K562 (cell line): ENCODE measurements at regions of chr11 and their contacts with region 1.

Region 1: GRCh38 chr11:125887373-125888324 is at the start of gene HYLS1:
- DNase-seq: peak; percentile 85 to 94 (median 89)
- ATAC-seq: peak; percentile 96
- H3K4me3 ChIP-seq: peak within 1 kb of the TSS; percentile 62
- H3K27ac ChIP-seq: peak within 1 kb of the TSS; percentile 83
- H3K4me1 ChIP-seq: peaks cover 13 to 31% of the 10 kb centered on the region in 2 experiments
- H3K27me3 ChIP-seq: no peaks in the 10 kb centered on the region
- CTCF ChIP-seq: peak; percentile 29 to 56 (median 31); a peak in 5 of 6 replicates
- EP300 ChIP-seq: no peak
- POLR2A ChIP-seq: peak; percentile 86
- RAD21 ChIP-seq: peak in 1 of 2 experiments; percentile 21; a peak in 1 of 4 replicates
- polyA plus RNA-seq, gene HYLS1: 7.4 to 8.2 TPM

Region 2: GRCh38 chr11:124953753-124954589 is 933.7 kb before region 1 on chr11 and contains the start of gene CCDC15:
- CTCF ChIA-PET with region 1: no interaction called
- POLR2A ChIA-PET with region 1: no interaction called
- in situ Hi-C with region 1: loop called (anchors 25 kb)
- intact Hi-C with region 1: no loop called
- DNase-seq: peak; percentile 90 to 98 (median 92)
- ATAC-seq: peak; percentile 100
- H3K4me3 ChIP-seq: peak within 1 kb of the TSS; percentile 47
- H3K27ac ChIP-seq: peak within 1 kb of the TSS; percentile 81
- H3K4me1 ChIP-seq: peaks cover 5 to 7% of the 10 kb centered on the region in 2 experiments; a peak in 3 of 5 replicates
- H3K27me3 ChIP-seq: peaks cover 0 to 4% of the 10 kb centered on the region in 2 experiments; a peak in 2 of 5 replicates
- CTCF ChIP-seq: no peak
- EP300 ChIP-seq: peak; percentile 75; the same call in 1 of the 2 replicates
- POLR2A ChIP-seq: peak; percentile 97
- RAD21 ChIP-seq: 0 out of 4 replicates have a peak, but pooled peaks of 1 of the 2 experiments have one; percentile 2
- polyA plus RNA-seq, gene CCDC15: 1.9 to 3.7 TPM

Region 3: GRCh38 chr11:125720781-125721180 is 166.9 kb before region 1 on chr11:
- CTCF ChIA-PET with region 1: no interaction called
- POLR2A ChIA-PET with region 1: no interaction called
- in situ Hi-C with region 1: no loop called
- intact Hi-C with region 1: no loop called
- DNase-seq: no peak
- ATAC-seq: no peak
- H3K4me3 ChIP-seq: no peak overlapping the region
- H3K27ac ChIP-seq: no peak overlapping the region
- H3K4me1 ChIP-seq: no peaks in the 10 kb centered on the region
- H3K27me3 ChIP-seq: peaks cover 7 to 22% of the 10 kb centered on the region in 2 experiments; a peak in 4 of 5 replicates
- CTCF ChIP-seq: no peak
- EP300 ChIP-seq: no peak
- POLR2A ChIP-seq: no peak
- RAD21 ChIP-seq: no peak

Region 4: GRCh38 chr11:125923012-125923579 is 35.4 kb after region 1 on chr11:
- CTCF ChIA-PET with region 1: no interaction called
- POLR2A ChIA-PET with region 1: no interaction called
- in situ Hi-C with region 1: no loop called
- intact Hi-C with region 1: no loop called
- DNase-seq: peak; percentile 70 to 82 (median 72)
- ATAC-seq: peak; percentile 96
- H3K4me3 ChIP-seq: no peak overlapping the region
- H3K27ac ChIP-seq: no peak overlapping the region
- H3K4me1 ChIP-seq: no peaks in the 10 kb centered on the region
- H3K27me3 ChIP-seq: peaks cover 45 to 68% of the 10 kb centered on the region in 2 experiments
- CTCF ChIP-seq: peak; percentile 80 to 90 (median 81)
- EP300 ChIP-seq: no peak
- POLR2A ChIP-seq: no peak
- RAD21 ChIP-seq: peak; percentile 84 to 88

Region 5: DNA sequence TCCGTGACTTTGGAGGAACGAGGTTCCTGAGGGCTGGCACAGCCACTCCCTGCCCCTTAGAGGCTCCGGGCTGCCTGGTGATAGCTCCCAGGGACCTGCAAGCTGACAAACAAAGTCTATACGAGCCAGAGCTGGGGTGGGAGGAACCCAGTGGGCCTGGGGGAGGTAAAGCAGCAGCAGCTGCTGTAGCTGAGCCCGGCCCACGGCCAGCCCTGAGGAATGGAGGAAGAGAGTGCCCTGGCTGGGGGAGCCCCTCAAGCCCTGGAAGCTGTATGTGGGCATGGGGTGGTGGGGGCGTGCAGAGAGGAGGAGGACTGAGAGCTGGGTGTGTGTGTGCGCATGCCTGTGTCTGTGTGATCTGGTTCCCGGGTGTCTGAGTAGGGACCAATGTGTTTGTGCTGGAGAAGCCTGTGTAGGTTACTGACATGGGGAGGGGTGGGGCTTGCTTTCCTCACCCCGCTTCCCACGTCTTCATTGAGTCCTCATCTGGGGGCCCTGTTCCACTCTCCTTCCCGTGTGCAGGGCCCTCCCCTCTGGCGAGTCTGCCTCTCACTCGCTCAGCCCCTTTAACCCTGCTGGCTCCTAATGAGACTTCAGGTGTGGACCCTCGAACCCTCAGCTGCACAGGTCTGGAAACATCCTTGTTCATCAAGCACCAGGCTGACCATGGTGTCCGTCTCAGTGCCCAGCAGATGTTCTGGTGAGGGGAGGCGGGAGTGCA is 478.6 kb after region 1 on chr11:
- CTCF ChIA-PET with region 1: no interaction called
- POLR2A ChIA-PET with region 1: no interaction called
- in situ Hi-C with region 1: no loop called
- intact Hi-C with region 1: no loop called
- DNase-seq: no peak
- ATAC-seq: no peak; the same call in 2 of the 3 replicates
- H3K4me3 ChIP-seq: no peak overlapping the region
- H3K27ac ChIP-seq: no peak overlapping the region
- H3K4me1 ChIP-seq: peaks cover 0 to 8% of the 10 kb centered on the region in 2 experiments; a peak in 2 of 5 replicates
- H3K27me3 ChIP-seq: no peaks in the 10 kb centered on the region
- CTCF ChIP-seq: no peak
- EP300 ChIP-seq: no peak
- POLR2A ChIP-seq: no peak
- RAD21 ChIP-seq: no peak

Region 6: DNA sequence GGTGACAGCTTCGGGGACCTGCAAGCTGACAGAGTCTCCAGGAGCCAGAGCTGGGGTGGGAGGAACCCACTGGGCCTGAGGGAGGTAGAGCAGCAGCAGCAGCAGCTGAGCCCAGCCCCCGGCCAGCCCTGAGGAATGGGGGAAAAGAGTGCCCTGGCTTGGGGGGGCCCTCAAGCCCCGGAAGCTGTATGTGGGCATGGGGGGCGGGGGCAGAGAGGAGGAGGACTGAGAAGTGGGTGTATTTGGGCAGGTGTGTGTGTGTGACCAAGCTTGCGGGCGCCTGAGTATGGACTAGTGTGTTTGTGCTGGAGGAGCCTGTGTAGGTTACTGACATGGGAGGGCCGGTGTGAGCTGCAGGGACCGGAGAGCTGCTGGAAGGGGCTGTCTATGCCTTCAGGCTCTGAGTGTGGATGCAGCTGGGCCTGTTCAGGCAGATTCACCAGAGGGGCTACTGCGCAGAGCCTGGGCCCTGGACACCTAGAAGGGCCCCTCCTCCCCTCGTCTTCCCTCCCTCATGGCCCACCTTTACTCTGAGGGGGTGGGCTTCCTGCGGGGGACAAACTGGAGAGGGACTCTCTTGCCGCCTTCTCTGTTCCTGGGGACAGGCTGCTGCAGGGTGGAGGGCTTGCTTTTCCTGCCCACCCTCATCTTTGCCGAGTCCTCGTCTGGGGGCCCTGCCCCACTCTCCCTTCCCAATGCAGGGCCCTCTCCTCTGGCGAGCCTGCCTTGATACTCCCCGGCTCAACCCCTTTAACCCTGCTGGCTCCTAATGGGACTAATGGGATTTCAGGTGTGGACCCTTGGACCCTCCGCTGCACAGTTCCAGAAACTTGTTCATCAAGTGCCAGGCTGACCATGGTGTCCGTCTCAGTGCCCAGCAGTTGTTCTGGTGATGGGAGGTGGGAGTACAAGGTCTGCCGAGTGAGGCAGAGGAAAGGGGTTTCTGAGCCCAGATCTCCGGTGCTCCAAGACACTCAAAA is 496.0 kb after region 1 on chr11:
- CTCF ChIA-PET with region 1: no interaction called
- POLR2A ChIA-PET with region 1: no interaction called
- in situ Hi-C with region 1: no loop called
- intact Hi-C with region 1: no loop called
- DNase-seq: no peak
- ATAC-seq: peak; percentile 37; the same call in 2 of the 3 replicates
- H3K4me3 ChIP-seq: no peak overlapping the region
- H3K27ac ChIP-seq: no peak overlapping the region
- H3K4me1 ChIP-seq: peaks cover 0 to 9% of the 10 kb centered on the region in 2 experiments
- H3K27me3 ChIP-seq: no peaks in the 10 kb centered on the region
- CTCF ChIP-seq: no peak
- EP300 ChIP-seq: no peak
- POLR2A ChIP-seq: no peak
- RAD21 ChIP-seq: no peak